ENCODE measurements at regions of chr4 and their contacts with region 1.

Region 1: DNA sequence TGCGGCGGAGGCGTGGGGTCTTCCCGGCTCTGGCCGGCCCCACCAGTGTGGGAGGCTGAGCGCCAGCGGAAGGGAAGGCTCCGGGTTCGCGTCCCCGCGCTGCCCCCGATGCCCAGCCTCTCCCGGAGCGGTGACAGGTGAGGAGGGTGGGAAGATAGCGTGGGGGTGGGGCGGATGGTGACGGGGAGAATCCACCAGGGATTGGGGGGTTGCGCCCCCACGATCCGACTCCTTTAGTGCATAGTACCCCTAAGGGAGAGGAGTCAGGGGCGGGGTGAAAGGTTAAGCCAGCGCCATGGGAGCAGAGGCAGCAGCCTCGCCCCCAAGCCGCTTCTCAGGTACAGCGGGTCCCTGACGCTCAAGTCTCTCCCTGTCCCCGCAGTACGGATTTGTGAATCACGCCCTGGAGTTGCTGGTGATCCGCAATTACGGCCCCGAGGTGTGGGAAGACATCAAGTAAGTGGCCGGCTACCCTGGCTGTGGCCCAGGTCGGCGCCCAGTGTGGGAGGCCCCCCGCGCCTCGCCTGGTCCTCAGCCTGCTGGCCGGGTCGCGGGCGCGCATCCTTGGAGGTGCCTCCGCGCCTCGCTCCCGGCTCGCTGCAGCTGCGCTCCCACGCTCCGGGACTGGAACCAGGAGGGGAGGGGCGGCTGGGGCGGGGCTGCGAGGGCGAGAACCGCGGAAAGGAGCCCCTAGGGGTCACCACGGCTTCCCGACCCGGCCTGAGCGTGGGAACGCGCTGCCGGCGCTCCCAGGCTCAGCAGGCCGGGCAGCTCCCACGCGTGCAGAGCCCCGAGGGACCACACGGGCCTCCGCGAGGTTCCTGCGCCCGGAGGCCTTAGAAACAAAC is 808 bp downstream of the GUCY1B1 start:
- DNase-seq: peak in 1 of 2 donors; percentile 18
- ATAC-seq: peak; percentile 25 to 30
- H3K4me3 ChIP-seq: peak overlapping the region; percentile 67 to 78 (median 68)
- H3K27ac ChIP-seq: peak overlapping the region; percentile 79 to 80 (median 80)
- H3K4me1 ChIP-seq: peaks cover 0 to 4% of the 10 kb centered on the region in 2 donors
- H3K27me3 ChIP-seq: peaks cover 0 to 17% (median 6%) of the 10 kb centered on the region in 3 donors
- CTCF ChIP-seq: no peak
- POLR2A ChIP-seq: peak; percentile 11 to 19

Region 2: GRCh38 chr4:155693015-155693663 is 66.5 kb before region 1 on chr4:
- in situ Hi-C with region 1: no loop called
- intact Hi-C with region 1: loop called (anchors 10 kb)
- DNase-seq: no peak
- ATAC-seq: no peak
- H3K4me3 ChIP-seq: no peak overlapping the region
- H3K27ac ChIP-seq: peak overlapping the region in 2 of 4 donors; percentile 35 to 37
- H3K4me1 ChIP-seq: peaks cover 0 to 6% of the 10 kb centered on the region in 2 donors
- H3K27me3 ChIP-seq: no peaks in the 10 kb centered on the region
- CTCF ChIP-seq: no peak
- POLR2A ChIP-seq: no peak

Region 3: DNA sequence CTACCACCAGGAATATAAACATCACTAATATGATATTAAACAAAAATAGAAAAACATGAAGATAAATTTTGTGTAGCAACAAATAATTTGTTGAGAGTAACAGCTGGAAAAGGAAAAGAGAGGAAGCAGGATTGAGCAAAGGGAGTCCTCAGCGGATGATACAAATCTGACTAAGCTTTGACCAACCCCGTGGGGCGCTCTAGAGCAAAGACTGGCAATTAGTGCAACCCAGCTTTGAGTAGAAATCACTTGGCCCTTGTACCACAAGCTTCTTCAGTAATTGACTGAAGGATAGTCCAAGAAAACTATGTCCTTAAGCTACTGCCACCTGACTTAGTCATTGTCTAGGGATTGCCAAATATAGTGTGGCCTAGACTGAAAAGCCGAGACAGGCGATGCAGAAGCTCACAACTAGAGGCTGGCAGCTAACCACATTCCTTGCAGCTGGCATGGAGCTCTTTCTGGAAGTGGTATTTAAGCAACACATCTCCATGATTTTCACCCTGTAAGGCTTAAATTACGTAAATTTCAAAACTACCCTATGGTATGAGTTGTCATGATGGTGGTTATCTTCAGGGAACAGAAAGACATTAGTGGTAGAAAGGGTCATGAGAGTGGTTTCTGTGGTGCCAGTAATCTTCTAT is 815.9 kb after region 1 on chr4:
- in situ Hi-C with region 1: no loop called
- intact Hi-C with region 1: no loop called
- DNase-seq: no peak
- ATAC-seq: no peak
- H3K4me3 ChIP-seq: no peak overlapping the region
- H3K27ac ChIP-seq: no peak overlapping the region
- H3K4me1 ChIP-seq: no peaks in the 10 kb centered on the region
- H3K27me3 ChIP-seq: no peaks in the 10 kb centered on the region
- CTCF ChIP-seq: no peak
- POLR2A ChIP-seq: no peak